Ascending aorta (tissue), 2 donors: ENCODE measurements at regions of chr20 and their contacts with region 1.

Region 1: GRCh38 chr20:46681032-46681854 is 8.0 kb downstream of the TP53RK start:
- DNase-seq: peak in 1 of 2 donors; percentile 69
- H3K4me3 ChIP-seq: no peak overlapping the region
- H3K27ac ChIP-seq: no peak overlapping the region
- H3K4me1 ChIP-seq: peaks cover 7 to 10% of the 10 kb centered on the region in 2 donors
- H3K27me3 ChIP-seq: no peaks in the 10 kb centered on the region
- CTCF ChIP-seq: peak; percentile 47 to 71 (median 52)

Region 2: DNA sequence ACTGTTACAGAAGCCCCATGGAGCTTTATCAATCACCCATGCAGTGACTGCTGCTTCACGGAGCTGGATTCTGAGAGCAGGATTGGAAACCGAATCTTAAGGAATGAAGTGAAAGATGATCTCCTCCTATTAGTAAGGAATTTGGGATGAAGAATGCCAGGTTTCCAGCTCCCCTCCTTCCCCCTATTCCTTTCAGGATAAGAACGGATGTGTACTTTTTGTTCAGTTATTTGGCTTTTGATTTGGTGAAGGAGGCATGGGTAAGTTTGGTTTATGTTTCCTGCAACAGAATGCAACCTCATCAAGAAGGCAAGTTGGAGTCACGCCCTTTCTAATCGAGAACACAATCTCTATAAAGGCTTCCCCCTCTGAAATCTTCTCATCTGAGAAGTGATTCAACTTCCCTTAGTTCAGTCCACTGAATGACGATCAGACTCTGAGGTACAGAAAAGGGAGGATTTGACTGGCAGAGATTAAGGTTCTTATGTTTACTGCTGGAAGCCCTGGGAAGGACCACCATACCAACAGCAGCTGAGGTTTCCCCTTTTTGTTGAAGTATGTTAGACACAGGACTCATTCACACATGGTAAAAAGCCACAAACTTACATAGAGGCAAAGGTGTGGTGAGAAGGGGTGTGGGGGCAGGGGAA is 280.3 kb before region 1 on chr20:
- intact Hi-C with region 1: loop called (anchors 5 kb)
- DNase-seq: no peak
- H3K4me3 ChIP-seq: peak overlapping the region; percentile 20 to 22
- H3K27ac ChIP-seq: peak overlapping the region; percentile 77 to 82
- H3K4me1 ChIP-seq: peaks cover 39 to 69% of the 10 kb centered on the region in 2 donors
- H3K27me3 ChIP-seq: no peaks in the 10 kb centered on the region
- CTCF ChIP-seq: no peak

Region 3: DNA sequence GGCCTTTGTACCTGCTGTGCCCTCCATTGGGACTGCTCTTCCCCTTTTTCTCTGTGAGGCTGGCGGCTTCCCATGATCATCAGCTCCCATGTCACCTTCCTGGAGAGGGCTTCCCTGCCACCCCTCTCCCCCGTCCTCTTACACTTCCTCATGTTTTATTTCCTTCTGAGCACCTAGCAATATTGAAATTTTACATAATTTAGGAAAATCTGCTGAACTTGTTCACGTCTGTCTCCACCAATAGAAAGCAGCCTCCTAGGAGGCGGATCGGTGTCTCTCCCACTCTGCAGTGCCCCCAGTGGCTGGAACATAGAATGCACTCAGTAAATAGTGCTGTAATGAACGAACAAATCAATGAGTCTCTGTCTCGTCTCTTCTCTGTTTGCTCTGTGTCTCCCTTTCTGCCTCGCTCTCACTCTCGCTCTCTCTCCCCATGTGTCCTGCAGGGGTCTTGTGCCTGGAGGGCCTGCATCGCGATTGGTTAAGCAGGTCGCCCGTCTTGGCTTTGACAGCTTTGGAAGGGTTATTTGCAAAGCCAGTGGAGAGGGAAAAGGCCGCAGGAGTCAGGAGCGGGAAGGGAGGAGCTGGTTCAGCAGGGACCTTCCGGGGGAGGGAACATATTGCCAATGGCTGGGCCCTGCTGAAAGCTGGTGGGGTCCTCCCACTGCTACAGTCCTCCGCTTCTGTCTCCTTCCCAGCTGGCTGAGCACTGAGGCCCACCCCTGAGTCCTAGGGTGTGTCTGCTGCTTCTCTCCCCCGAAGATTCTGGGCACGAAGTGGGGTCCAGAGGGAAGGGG is 118.7 kb before region 1 on chr20:
- intact Hi-C with region 1: loop called (anchors 5 kb)
- DNase-seq: peak in 1 of 2 donors; percentile 86
- H3K4me3 ChIP-seq: peak overlapping the region; percentile 37 to 54
- H3K27ac ChIP-seq: peak overlapping the region in 1 of 2 donors; percentile 22
- H3K4me1 ChIP-seq: peaks cover 0 to 4% of the 10 kb centered on the region in 2 donors
- H3K27me3 ChIP-seq: no peaks in the 10 kb centered on the region
- CTCF ChIP-seq: peak; percentile 54 to 91 (median 90)

Region 4: GRCh38 chr20:46638134-46638897 is 42.9 kb before region 1 on chr20:
- intact Hi-C with region 1: no loop called
- DNase-seq: no peak
- H3K4me3 ChIP-seq: no peak overlapping the region
- H3K27ac ChIP-seq: no peak overlapping the region
- H3K4me1 ChIP-seq: no peaks in the 10 kb centered on the region
- H3K27me3 ChIP-seq: no peaks in the 10 kb centered on the region
- CTCF ChIP-seq: no peak

Region 5: DNA sequence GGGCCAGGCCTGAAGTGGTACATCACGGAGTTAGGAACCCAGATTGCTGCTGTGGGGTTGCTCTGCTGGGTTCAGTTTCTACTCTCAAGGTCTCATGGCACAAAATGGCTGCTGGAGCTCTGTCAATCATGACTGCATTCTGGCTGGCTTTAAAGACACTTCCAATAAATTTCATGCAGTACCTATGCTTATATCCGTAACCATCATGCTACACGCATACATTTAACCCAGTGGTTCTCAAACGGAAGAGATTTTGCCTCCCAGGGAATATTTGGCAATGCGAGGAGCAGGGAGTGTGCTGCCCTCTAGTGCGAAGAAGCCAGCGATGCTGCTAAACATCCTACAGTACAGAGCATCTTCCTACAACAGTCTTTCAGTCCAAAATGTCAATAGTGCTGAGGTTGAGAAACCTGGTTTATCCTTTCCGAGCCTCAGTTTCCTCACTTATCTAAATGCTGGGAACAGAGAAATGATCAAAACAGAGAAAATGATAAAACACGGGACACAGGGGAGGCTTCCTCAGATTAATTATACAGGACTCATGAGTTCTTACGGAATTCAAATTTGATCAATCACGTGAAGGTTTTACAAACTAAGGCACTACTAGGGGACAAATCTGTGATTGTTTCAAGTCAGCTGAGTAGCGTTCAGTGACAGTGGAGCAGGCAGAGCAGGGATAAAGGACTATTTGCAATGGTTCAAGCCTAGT is 18.6 kb after region 1 on chr20:
- intact Hi-C with region 1: no loop called
- DNase-seq: no peak
- H3K4me3 ChIP-seq: no peak overlapping the region
- H3K27ac ChIP-seq: no peak overlapping the region
- H3K4me1 ChIP-seq: no peaks in the 10 kb centered on the region
- H3K27me3 ChIP-seq: no peaks in the 10 kb centered on the region
- CTCF ChIP-seq: peak in 1 of 3 experiments; percentile 19

Region 6: GRCh38 chr20:46799781-46800408 is 118.7 kb after region 1 on chr20:
- intact Hi-C with region 1: no loop called
- DNase-seq: no peak
- H3K4me3 ChIP-seq: no peak overlapping the region
- H3K27ac ChIP-seq: no peak overlapping the region
- H3K4me1 ChIP-seq: no peaks in the 10 kb centered on the region
- H3K27me3 ChIP-seq: no peaks in the 10 kb centered on the region
- CTCF ChIP-seq: no peak